Heart right ventricle (tissue), 16 donors: ENCODE measurements at regions of chr1 and their contacts with region 1.

Region 1: DNA sequence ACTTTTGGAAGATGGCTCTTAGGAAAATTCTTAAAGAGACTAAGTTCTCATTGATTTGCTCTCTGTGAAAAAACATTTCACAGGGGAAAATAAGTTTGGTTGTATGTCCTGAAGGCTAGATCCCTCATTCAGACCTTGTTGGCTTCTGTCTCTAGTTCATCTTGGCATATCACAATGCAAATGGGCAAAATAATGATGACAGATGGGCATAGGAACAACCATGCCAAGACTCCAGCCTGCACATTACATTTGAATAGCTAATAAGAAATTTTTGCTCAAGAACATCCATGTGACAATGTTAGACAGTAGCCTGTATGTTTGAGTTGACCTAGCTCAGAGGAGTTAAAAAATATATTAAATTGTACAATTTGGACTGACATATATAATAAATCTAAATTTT is 292.9 kb downstream of the PLA2G4A start:
- DNase-seq: no peak
- ATAC-seq: no peak
- H3K4me3 ChIP-seq: no peak overlapping the region
- H3K27ac ChIP-seq: no peak overlapping the region
- H3K4me1 ChIP-seq: no peaks in the 10 kb centered on the region
- H3K27me3 ChIP-seq: no peaks in the 10 kb centered on the region
- CTCF ChIP-seq: no peak

Region 2: DNA sequence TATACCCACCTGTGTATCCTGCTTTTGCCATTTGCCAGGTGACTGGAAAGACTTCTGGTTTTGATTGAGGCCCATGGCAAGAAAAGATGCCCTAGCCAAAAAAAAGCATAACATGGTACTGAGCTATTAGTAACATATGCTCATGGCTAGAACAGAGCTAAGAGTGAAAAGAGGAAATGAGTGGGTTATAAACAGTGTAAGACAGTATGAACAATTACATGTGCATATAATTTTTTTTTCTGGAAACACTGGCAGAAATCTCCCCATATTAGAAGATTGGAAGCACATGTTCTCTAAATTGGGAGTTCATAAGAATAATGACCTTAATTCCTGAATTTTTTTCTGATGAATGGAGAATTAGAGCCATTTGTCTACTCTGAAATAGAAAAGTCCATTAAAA is 619.6 kb before region 1 on chr1:
- intact Hi-C with region 1: no loop called
- DNase-seq: no peak
- ATAC-seq: no peak
- H3K4me3 ChIP-seq: no peak overlapping the region
- H3K27ac ChIP-seq: no peak overlapping the region
- H3K4me1 ChIP-seq: no peaks in the 10 kb centered on the region
- H3K27me3 ChIP-seq: no peaks in the 10 kb centered on the region
- CTCF ChIP-seq: no peak

Region 3: GRCh38 chr1:187197685-187198084 is 76.0 kb after region 1 on chr1:
- intact Hi-C with region 1: no loop called
- DNase-seq: no peak
- ATAC-seq: no peak
- H3K4me3 ChIP-seq: no peak overlapping the region
- H3K27ac ChIP-seq: no peak overlapping the region
- H3K4me1 ChIP-seq: no peaks in the 10 kb centered on the region
- H3K27me3 ChIP-seq: no peaks in the 10 kb centered on the region
- CTCF ChIP-seq: no peak

Region 4: GRCh38 chr1:187842396-187843165 is 720.9 kb after region 1 on chr1:
- intact Hi-C with region 1: loop called in 1 of 10 experiments (anchors 10 kb)
- DNase-seq: peak in 1 of 2 donors; percentile 5
- ATAC-seq: no peak
- H3K4me3 ChIP-seq: no peak overlapping the region
- H3K27ac ChIP-seq: peak overlapping the region in 1 of 10 donors; percentile 34
- H3K4me1 ChIP-seq: peaks cover 0 to 14% (median 6%) of the 10 kb centered on the region in 9 donors
- H3K27me3 ChIP-seq: no peaks in the 10 kb centered on the region
- CTCF ChIP-seq: no peak